ENCODE measurements at regions of chr16 and their contacts with region 1.

Region 1: GRCh38 chr16:15765880-15766279 is 90.9 kb downstream of the MYH11 start:
- DNase-seq: peak in 1 of 2 donors; percentile 52
- ATAC-seq: peak; percentile 62 to 86 (median 70)
- H3K4me3 ChIP-seq: no peak overlapping the region
- H3K27ac ChIP-seq: no peak overlapping the region
- H3K4me1 ChIP-seq: peaks cover 0 to 18% (median 6%) of the 10 kb centered on the region in 9 donors
- H3K27me3 ChIP-seq: peaks cover 0 to 9% (median 0%) of the 10 kb centered on the region in 7 donors
- CTCF ChIP-seq: peak; percentile 44 to 81 (median 70)

Region 2: GRCh38 chr16:15643048-15643945 is 122.6 kb before region 1 on chr16 and contains the start of gene MARF1:
- intact Hi-C with region 1: no loop called
- DNase-seq: peak; percentile 99 to 100
- ATAC-seq: peak; percentile 97 to 99 (median 98)
- H3K4me3 ChIP-seq: peak within 1 kb of the TSS; percentile 65 to 97 (median 85)
- H3K27ac ChIP-seq: peak within 1 kb of the TSS; percentile 87 to 100 (median 99)
- H3K4me1 ChIP-seq: peaks cover 0 to 32% (median 26%) of the 10 kb centered on the region in 9 donors
- H3K27me3 ChIP-seq: no peaks in the 10 kb centered on the region
- CTCF ChIP-seq: peak; percentile 27 to 77 (median 52)
- total RNA-seq, gene MARF1: 39.1 to 59.1 (median 43.0) TPM

Region 3: GRCh38 chr16:15811481-15812400 is 45.9 kb after region 1 on chr16:
- intact Hi-C with region 1: loop called in 1 of 10 experiments (anchors 5 kb)
- DNase-seq: peak in 1 of 2 donors; percentile 44
- ATAC-seq: peak; percentile 59 to 86 (median 80)
- H3K4me3 ChIP-seq: peak overlapping the region in 1 of 10 donors; percentile 17
- H3K27ac ChIP-seq: peak overlapping the region in 6 of 10 donors; percentile 10 to 75 (median 42)
- H3K4me1 ChIP-seq: peaks cover 5 to 40% (median 16%) of the 10 kb centered on the region in 9 donors
- H3K27me3 ChIP-seq: peaks cover 0 to 18% (median 16%) of the 10 kb centered on the region in 7 donors
- CTCF ChIP-seq: no peak

Region 4: DNA sequence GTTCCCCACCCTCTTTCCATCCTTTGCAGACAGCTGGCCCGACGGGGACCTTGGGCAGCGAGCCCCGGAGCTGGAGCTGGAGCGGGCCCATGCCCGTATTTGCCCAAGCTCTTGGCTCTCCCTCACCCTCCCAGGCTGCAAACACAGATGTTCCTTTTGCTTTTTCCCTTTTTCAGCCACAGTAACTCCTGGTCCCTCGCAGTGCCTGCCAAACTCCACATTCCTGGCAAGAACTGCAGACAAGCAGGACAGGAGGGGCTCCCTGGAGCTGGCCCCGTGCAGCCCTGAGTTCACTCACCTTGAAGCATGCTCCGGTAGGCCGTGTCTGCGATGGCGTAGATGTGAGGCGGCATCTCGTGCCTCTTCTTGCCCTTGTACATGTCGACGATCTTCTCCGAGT is 57.1 kb after region 1 on chr16:
- intact Hi-C with region 1: loop called in 7 of 10 experiments (anchors 2 to 10 kb)
- DNase-seq: no peak
- ATAC-seq: peak in 2 of 8 donors; percentile 24 to 28
- H3K4me3 ChIP-seq: no peak overlapping the region
- H3K27ac ChIP-seq: no peak overlapping the region
- H3K4me1 ChIP-seq: no peaks in the 10 kb centered on the region
- H3K27me3 ChIP-seq: peaks cover 0 to 33% (median 0%) of the 10 kb centered on the region in 7 donors
- CTCF ChIP-seq: no peak

Region 5: GRCh38 chr16:15829460-15829859 is 63.6 kb after region 1 on chr16:
- intact Hi-C with region 1: loop called in 5 of 10 experiments (anchors 5 to 10 kb)
- DNase-seq: peak; percentile 47 to 48
- ATAC-seq: peak; percentile 61 to 89 (median 82)
- H3K4me3 ChIP-seq: no peak overlapping the region
- H3K27ac ChIP-seq: no peak overlapping the region
- H3K4me1 ChIP-seq: peaks cover 0 to 6% (median 0%) of the 10 kb centered on the region in 9 donors
- H3K27me3 ChIP-seq: peaks cover 0 to 22% (median 0%) of the 10 kb centered on the region in 7 donors
- CTCF ChIP-seq: no peak

Region 6: GRCh38 chr16:16127469-16128116 is 361.7 kb after region 1 on chr16:
- intact Hi-C with region 1: loop called in 8 of 10 experiments (anchors 2 to 5 kb)
- DNase-seq: peak; percentile 47 to 65
- ATAC-seq: peak; percentile 79 to 95 (median 84)
- H3K4me3 ChIP-seq: no peak overlapping the region
- H3K27ac ChIP-seq: no peak overlapping the region
- H3K4me1 ChIP-seq: no peaks in the 10 kb centered on the region
- H3K27me3 ChIP-seq: no peaks in the 10 kb centered on the region
- CTCF ChIP-seq: peak; percentile 82 to 93 (median 88)

Region 7: DNA sequence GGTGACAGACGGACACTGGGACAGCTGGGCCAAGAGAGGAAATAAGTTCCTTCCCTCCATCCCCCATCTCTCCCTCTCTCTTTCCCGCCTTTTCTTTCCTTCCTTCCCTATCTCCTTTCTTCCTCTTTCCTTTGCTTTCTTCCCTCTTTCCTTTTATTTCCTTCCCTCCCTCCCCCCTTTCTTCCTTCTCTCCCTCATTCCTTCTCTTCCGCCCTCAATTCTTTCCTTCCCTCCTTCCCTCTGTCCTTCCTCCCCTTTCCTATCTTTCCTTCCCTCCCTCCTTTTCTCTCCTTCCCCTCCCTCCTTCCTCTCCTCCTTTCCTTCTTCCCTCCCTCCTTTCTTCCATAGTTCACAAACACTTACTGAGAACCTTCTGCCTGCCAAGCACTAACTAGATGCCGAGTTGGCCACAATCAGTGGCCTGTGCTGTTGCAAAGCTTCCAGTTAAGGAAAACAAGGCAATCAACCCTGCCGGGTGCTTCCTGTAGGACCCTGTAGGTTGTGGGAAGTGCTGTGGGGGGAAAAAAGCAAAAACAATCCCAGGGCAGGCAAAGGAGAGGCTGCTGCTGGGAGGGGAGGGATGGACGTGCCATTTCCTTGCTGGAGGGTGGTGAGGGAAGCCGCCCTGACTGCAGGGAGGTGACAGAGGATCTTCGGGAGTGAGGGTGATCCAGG is 425.8 kb after region 1 on chr16:
- intact Hi-C with region 1: loop called in 5 of 10 experiments (anchors 5 to 10 kb)
- DNase-seq: no peak
- ATAC-seq: no peak
- H3K4me3 ChIP-seq: no peak overlapping the region
- H3K27ac ChIP-seq: no peak overlapping the region
- H3K4me1 ChIP-seq: no peaks in the 10 kb centered on the region
- H3K27me3 ChIP-seq: no peaks in the 10 kb centered on the region
- CTCF ChIP-seq: no peak

Region 8: DNA sequence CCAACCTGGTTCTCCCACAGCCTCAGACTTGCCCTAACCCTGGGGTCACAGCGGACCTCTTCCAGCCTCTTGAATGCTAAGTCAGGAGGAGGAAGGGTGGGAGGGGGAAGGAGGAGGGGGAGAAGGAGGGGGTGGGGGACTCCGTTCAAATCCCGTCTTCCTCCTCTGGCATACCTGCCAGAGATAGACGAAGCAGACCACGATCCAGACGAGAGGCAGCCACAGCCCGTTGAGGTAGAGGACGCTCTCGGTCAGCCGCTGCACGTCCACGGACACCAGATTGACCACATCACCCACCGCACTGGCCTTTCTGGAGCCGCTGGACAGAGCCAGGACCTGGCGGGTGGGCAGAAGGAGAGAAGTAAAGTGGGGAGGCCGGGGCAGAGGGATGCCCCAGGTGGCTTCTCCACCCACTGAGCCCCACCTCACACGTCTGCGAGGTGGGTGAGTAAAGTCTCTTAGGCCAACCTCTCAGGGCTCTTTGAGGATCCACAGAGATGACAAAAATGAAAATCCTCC is 432.0 kb after region 1 on chr16:
- intact Hi-C with region 1: loop called in 5 of 10 experiments (anchors 5 to 10 kb)
- DNase-seq: no peak
- ATAC-seq: no peak
- H3K4me3 ChIP-seq: no peak overlapping the region
- H3K27ac ChIP-seq: no peak overlapping the region
- H3K4me1 ChIP-seq: no peaks in the 10 kb centered on the region
- H3K27me3 ChIP-seq: no peaks in the 10 kb centered on the region
- CTCF ChIP-seq: no peak